ENCODE measurements at regions of chr17 and their contacts with region 1.

Region 1: GRCh38 chr17:80791758-80792284 is 199.8 kb upstream of the CHMP6 start:
- DNase-seq: no peak
- ATAC-seq: no peak

Region 2: GRCh38 chr17:80544655-80545498 is 246.9 kb before region 1 on chr17 and contains the start of gene RPTOR:
- intact Hi-C with region 1: loop called (anchors 10 kb)
- DNase-seq: peak; percentile 94
- ATAC-seq: peak; percentile 98
- total RNA-seq, gene RPTOR: 18.8 TPM

Region 3: DNA sequence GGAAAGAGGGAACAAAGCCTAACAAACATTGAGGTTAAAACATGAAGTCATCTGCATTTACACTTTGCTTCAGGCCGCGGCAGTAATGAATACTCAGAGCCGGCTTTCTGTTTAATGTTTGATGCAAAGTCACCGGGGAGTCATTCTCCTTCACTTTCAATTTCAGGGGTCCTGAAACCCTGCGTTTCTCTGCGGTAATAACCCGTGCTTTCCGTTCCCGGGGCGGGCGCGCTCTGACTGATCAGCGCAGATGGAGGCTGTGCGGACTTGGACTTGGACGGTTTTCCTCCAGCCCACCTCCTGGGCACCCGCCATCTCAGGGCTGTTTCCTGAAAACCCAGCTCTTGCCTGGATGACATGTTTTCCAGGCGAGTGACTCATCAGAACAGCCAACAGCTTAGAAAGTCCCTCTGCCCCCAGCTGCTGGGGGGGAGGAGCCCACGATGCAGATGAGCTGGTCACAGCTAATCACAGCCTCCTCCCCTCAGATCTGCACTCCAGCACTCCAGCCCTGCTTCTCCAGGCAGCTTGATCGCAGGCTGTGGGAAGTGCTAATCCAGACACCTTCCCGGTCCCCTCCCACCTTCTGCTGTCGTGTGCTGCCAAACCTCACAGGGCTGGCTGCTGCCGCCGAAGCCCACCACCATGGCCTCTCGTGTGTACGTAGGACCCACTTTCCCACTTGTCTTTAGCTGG is 41.2 kb after region 1 on chr17:
- intact Hi-C with region 1: loop called (anchors 5 kb)
- DNase-seq: peak; percentile 86
- ATAC-seq: peak; percentile 96